Activated CD8-positive, alpha-beta T cell treated with anti-CD3 and anti-CD28 coated beads for 36 hours (primary cell): ENCODE measurements at regions of chr17 and their contacts with region 1.

Region 1: GRCh38 chr17:74059479-74060240 is 143.8 kb upstream of the RPL38 start:
- DNase-seq: no peak
- ATAC-seq: no peak
- H3K4me3 Mint-ChIP-seq: no peak overlapping the region
- H3K27ac Mint-ChIP-seq: no peak overlapping the region
- H3K4me1 Mint-ChIP-seq: no peaks in the 10 kb centered on the region
- H3K27me3 Mint-ChIP-seq: peaks cover 12% of the 10 kb centered on the region
- CTCF ChIP-seq: no peak

Region 2: DNA sequence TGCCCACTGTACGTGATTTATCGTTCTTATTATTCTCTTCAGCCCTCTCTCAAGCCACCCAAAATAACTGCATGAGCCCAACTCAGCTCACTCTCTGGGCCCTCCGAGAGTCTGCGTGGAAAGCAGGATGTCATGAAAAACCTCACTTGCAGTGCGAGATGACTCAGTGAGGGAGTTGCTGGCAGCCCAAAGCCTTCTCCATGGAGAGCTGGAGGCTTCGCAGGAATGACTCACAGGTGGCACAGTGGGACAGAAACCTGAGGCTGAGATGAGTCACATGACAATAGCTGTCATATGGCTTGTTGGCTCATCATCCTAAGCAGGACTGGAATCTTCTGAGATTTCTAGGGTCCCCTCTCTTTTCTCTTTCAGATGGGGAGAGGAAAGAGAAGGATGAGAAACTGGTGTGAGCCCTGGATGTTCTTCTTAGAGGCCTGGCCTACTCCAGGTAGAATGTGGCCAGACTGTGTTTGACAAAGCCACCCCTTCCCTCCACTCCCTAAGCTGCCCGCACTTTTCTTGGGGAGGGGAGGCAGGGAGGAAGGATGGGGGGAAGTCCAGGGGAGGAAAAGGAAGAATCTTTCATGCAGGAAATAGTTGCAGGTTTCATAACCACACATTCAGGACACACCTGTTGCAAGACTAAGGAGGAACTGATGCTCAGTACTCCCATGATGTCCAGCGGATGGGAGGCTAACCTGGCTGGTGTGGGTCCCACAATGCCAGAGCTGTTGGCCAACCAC is 16.7 kb before region 1 on chr17:
- CTCF ChIA-PET with region 1: no interaction called
- POLR2A ChIA-PET with region 1: no interaction called
- intact Hi-C with region 1: no loop called
- DNase-seq: peak; percentile 43
- ATAC-seq: peak; percentile 74
- H3K4me3 Mint-ChIP-seq: no peak overlapping the region
- H3K27ac Mint-ChIP-seq: no peak overlapping the region
- H3K4me1 Mint-ChIP-seq: no peaks in the 10 kb centered on the region
- H3K27me3 Mint-ChIP-seq: peaks cover 5% of the 10 kb centered on the region
- CTCF ChIP-seq: no peak

Region 3: GRCh38 chr17:74118504-74118903 is 58.8 kb after region 1 on chr17:
- CTCF ChIA-PET with region 1: no interaction called
- POLR2A ChIA-PET with region 1: no interaction called
- intact Hi-C with region 1: loop called (anchors 10 kb)
- DNase-seq: no peak
- ATAC-seq: no peak
- H3K4me3 Mint-ChIP-seq: no peak overlapping the region
- H3K27ac Mint-ChIP-seq: no peak overlapping the region
- H3K4me1 Mint-ChIP-seq: no peaks in the 10 kb centered on the region
- H3K27me3 Mint-ChIP-seq: peaks cover 20% of the 10 kb centered on the region
- CTCF ChIP-seq: no peak